ENCODE measurements at regions of chr1 and their contacts with region 1.

Region 1: DNA sequence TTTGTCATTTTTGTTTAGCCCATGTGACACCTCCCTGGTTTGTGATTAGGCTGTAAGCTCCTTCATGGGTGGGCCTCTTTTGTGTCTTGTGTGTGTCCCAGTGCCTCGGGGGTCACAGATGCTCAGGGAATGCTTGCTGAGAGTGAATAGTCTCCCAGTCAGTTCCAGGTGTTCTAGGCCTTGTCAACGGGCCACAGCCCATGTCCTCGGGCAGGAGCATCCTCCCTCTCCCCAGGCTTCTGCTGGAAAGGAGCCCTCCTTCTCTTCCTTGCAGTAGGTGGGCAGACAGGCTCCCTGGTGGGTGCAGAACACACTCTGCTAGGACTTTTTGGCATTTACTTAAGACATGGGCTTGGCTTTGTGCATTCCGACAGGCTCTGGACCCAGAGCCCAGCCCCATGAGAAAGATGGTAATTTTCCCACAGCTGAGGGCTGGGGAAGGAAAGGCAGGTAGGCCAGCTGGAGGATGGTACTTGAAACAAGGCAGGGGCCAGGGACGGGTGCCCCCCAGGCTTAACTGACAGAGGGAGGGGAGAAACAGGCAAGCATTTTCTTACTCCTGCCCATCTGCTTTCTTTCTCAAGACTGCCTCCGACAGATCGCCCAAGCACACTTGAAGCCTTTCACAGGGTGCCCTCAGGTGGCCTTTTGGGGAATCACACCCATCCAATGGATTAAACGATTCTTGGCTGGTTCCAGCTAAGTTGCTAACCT is 7.1 kb upstream of the CPLANE2 start:
- DNase-seq: peak; percentile 89
- ATAC-seq: peak; percentile 94
- H3K4me3 Mint-ChIP-seq: no peak overlapping the region
- H3K27ac Mint-ChIP-seq: no peak overlapping the region
- H3K4me1 Mint-ChIP-seq: peaks cover 5% of the 10 kb centered on the region
- H3K27me3 Mint-ChIP-seq: no peaks in the 10 kb centered on the region
- CTCF ChIP-seq: peak; percentile 87

Region 2: DNA sequence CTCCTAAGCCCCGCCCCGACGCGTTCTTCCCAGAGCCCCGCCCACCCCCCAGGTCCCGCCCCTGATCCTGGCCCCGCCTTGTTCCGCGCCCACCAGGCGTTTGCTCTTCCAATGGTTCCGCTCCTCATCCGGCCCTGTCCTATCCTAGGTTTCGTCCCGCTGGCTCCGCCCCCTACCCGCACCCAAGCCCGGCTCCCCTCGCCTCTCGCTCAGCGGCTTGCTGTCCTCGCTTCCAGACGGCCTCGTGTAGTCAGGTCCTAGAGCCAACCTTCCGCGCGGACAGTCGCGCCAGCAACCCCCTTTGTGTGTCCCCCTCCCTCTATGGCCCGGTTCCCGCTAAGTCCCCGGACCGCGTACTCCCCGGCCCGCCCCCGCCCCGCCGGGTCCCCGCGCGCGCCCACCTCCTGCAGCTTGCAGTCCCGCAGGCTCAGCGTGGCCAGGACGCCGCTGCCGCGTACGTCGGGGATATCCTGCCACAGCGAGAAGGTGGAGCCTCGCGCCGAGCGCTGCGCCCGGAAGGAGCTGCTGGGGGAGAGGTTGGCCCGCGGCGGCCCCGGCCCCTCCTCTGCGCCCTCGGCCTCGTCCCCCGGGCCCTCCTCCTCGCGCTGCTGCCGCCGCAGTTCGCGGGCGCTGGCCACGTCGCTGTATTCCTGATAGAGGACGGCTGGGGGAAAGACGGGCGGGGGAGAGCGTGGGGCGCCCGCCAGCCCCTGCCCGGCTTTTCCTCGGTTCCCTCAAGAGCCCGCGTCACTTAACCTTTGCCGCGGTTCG is 37.4 kb before region 1 on chr1:
- CTCF ChIA-PET with region 1: interaction called, 23 read pairs
- POLR2A ChIA-PET with region 1: interaction called, 3 read pairs
- intact Hi-C with region 1: no loop called
- DNase-seq: peak; percentile 96
- ATAC-seq: peak; percentile 93
- H3K4me3 Mint-ChIP-seq: peak overlapping the region; percentile 80
- H3K27ac Mint-ChIP-seq: peak overlapping the region; percentile 90
- H3K4me1 Mint-ChIP-seq: peaks cover 4% of the 10 kb centered on the region
- H3K27me3 Mint-ChIP-seq: no peaks in the 10 kb centered on the region
- CTCF ChIP-seq: no peak

Region 3: GRCh38 chr1:16254263-16254928 is 10.3 kb after region 1 on chr1:
- CTCF ChIA-PET with region 1: interaction called, 11 read pairs
- POLR2A ChIA-PET with region 1: no interaction called
- intact Hi-C with region 1: no loop called
- DNase-seq: no peak
- ATAC-seq: no peak
- H3K4me3 Mint-ChIP-seq: no peak overlapping the region
- H3K27ac Mint-ChIP-seq: peak overlapping the region; percentile 55
- H3K4me1 Mint-ChIP-seq: peaks cover 20% of the 10 kb centered on the region
- H3K27me3 Mint-ChIP-seq: no peaks in the 10 kb centered on the region
- CTCF ChIP-seq: no peak